Uterus (tissue), 4 donors: ENCODE measurements at regions of chr11 and their contacts with region 1.

Region 1: DNA sequence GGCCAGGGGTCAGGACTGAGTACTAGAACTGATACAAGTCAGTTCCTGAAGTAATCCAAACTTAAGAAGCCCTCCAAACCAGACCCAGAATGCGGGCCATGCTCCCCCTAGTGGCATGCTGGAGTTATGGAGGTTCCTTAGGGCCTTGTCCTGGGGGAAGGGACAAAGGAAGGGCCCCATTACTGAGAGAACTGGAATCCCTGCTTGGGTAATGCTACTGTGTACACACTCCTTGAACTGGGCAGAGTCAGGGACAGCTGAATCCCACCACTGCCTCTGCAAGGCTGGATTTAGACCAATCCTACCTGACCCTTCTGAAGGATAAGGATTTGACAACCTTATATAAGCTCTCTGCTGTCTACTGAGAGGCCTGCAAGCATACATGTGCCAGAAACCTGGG is 97.3 kb upstream of the AKIP1 start:
- DNase-seq: peak; percentile 80 to 85
- H3K4me3 ChIP-seq: no peak overlapping the region
- H3K27ac ChIP-seq: peak overlapping the region; percentile 90 to 96
- H3K4me1 ChIP-seq: peaks cover 6 to 11% of the 10 kb centered on the region in 2 donors
- H3K27me3 ChIP-seq: no peaks in the 10 kb centered on the region
- CTCF ChIP-seq: peak; percentile 75 to 88 (median 80)
- POLR2A ChIP-seq: no peak

Region 2: DNA sequence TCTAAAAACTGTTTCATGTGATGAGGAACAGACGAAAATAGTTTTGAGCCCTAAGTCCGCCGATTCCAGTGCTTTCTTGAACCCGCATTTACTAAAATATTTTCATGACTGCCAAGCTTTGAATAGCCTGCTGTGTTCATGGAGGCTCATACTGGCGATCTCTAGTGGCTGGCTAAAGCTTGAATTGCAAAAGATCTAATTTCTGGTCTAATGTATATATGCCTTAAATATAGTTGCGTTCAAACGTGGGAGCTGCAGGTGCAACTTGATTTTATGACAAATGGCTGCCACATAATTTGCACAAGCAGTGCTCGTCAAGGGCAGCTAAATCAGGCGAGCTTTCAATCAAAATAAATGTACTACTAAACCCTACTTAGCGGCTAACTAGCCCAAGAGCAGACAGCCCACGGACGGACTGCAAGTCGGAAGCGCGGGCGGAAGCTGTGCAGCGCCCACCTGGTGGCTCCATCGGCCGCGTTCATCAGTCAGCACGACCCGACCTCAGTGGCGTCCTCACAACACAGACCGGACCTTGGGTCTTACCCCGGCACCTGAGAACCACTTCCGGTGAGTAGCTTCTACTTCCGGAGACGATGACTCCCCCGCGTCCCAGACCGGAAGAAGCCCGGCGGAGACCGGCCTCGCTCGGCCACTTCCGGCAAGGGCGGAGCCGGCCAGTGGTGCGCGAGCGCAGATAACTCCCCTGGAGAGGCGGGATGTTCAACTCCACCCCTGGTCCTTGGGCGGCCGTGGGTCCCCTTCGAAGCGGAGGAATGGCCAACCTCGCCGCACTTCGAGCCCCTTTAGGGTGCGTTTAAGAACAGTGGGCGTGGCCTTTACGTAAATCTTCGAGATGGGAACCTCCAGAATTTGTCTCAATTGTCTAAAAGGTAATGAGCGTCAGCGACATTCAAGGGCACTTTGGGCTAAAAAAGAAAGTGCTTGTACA is 125.0 kb before region 1 on chr11:
- intact Hi-C with region 1: loop called (anchors 10 kb)
- DNase-seq: peak; percentile 94 to 96
- H3K4me3 ChIP-seq: peak overlapping the region; percentile 47 to 53
- H3K27ac ChIP-seq: peak overlapping the region; percentile 78 to 84
- H3K4me1 ChIP-seq: peaks cover 0 to 19% of the 10 kb centered on the region in 2 donors
- H3K27me3 ChIP-seq: no peaks in the 10 kb centered on the region
- CTCF ChIP-seq: peak in 3 of 4 experiments; percentile 25 to 44 (median 32)
- POLR2A ChIP-seq: peak in 1 of 2 donors; percentile 53